ENCODE measurements at regions of chr2 and their contacts with region 1.

Region 1: GRCh38 chr2:137654046-137654445 is 310.2 kb upstream of the HNMT start:
- DNase-seq: no peak
- H3K4me3 ChIP-seq: no peak overlapping the region
- H3K27ac ChIP-seq: no peak overlapping the region
- H3K4me1 ChIP-seq: no peaks in the 10 kb centered on the region
- H3K27me3 ChIP-seq: no peaks in the 10 kb centered on the region
- CTCF ChIP-seq: no peak

Region 2: DNA sequence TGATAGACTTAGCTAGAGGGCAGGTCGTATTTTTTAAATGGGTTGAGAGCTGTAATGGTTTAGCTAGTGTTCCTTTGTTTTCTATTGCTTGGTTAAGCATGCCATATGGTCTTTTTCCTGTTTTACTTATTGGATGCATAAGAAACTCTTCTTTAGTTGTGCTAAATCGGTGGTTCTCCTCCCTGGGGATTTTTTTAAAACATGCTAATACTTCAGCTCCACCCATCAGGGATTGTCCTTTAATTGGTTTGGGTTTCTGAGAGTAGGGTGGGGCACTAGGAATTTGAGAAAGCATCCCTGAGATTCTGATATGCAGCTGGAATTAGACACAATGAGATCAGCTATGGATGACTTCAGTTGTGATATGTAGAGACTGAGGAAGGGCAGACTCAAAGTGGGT is 391.5 kb before region 1 on chr2:
- CTCF ChIA-PET with region 1: no interaction called
- dilution Hi-C with region 1: no loop called
- in situ Hi-C with region 1: no loop called
- intact Hi-C with region 1: no loop called
- DNase-seq: no peak
- H3K4me3 ChIP-seq: no peak overlapping the region
- H3K27ac ChIP-seq: no peak overlapping the region
- H3K4me1 ChIP-seq: no peaks in the 10 kb centered on the region
- H3K27me3 ChIP-seq: no peaks in the 10 kb centered on the region
- CTCF ChIP-seq: no peak

Region 3: DNA sequence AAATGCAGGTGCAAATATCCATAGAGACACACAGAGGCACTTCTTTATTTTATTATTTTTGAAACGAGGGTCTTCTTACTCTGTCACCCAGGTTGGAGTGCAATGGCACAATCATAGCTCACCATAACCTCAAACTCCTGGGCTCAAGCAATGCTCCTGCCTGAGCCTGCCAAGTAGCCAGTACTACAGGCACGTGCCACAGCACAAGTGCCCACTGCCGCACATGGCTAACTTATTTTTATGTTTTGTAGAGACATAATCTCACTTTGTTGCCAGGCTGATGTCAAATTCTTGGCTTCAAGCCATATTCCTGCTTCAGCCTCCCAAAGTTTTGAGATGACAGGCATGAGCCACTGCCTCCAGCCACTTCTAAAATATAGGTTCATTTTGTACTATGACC is 351.1 kb before region 1 on chr2:
- CTCF ChIA-PET with region 1: interaction called, 10 read pairs
- dilution Hi-C with region 1: no loop called
- in situ Hi-C with region 1: no loop called
- intact Hi-C with region 1: no loop called
- DNase-seq: no peak
- H3K4me3 ChIP-seq: no peak overlapping the region
- H3K27ac ChIP-seq: no peak overlapping the region
- H3K4me1 ChIP-seq: no peaks in the 10 kb centered on the region
- H3K27me3 ChIP-seq: no peaks in the 10 kb centered on the region
- CTCF ChIP-seq: no peak

Measured in mammary epithelial cell (primary cell).